ENCODE measurements at regions of chr1 and their contacts with region 1.

Region 1: GRCh38 chr1:218521375-218522169 is 176.4 kb downstream of the TGFB2 start:
- DNase-seq: no peak
- H3K4me3 ChIP-seq: no peak overlapping the region
- H3K27ac ChIP-seq: no peak overlapping the region
- H3K4me1 ChIP-seq: no peaks in the 10 kb centered on the region
- H3K27me3 ChIP-seq: no peaks in the 10 kb centered on the region
- CTCF ChIP-seq: peak; percentile 75

Region 2: DNA sequence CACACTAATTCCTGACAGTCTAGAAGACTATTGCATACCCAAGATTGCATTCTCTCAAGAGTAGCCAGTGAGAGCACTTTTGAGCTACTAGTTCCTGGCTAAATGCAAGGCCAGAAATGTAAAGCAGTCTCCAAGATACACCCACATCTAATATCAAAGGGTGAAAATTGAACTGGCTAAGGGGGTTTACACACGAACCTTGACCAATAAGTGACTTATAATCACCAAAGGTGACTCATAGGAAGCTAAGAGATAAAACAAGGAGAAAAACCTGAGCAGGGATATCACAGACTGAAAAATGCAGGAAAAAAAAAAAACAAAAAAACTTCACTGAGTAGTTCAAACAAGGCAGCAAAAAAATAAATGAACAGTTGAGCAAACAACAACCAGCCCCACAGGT is 408.7 kb before region 1 on chr1:
- intact Hi-C with region 1: no loop called
- DNase-seq: no peak
- H3K4me3 ChIP-seq: no peak overlapping the region
- H3K27ac ChIP-seq: no peak overlapping the region
- H3K4me1 ChIP-seq: no peaks in the 10 kb centered on the region
- H3K27me3 ChIP-seq: no peaks in the 10 kb centered on the region
- CTCF ChIP-seq: no peak

Region 3: GRCh38 chr1:218330043-218330623 is 191.4 kb before region 1 on chr1:
- intact Hi-C with region 1: loop called (anchors 10 kb)
- DNase-seq: no peak
- H3K4me3 ChIP-seq: no peak overlapping the region
- H3K27ac ChIP-seq: no peak overlapping the region
- H3K4me1 ChIP-seq: no peaks in the 10 kb centered on the region
- H3K27me3 ChIP-seq: no peaks in the 10 kb centered on the region
- CTCF ChIP-seq: peak; percentile 77

Region 4: DNA sequence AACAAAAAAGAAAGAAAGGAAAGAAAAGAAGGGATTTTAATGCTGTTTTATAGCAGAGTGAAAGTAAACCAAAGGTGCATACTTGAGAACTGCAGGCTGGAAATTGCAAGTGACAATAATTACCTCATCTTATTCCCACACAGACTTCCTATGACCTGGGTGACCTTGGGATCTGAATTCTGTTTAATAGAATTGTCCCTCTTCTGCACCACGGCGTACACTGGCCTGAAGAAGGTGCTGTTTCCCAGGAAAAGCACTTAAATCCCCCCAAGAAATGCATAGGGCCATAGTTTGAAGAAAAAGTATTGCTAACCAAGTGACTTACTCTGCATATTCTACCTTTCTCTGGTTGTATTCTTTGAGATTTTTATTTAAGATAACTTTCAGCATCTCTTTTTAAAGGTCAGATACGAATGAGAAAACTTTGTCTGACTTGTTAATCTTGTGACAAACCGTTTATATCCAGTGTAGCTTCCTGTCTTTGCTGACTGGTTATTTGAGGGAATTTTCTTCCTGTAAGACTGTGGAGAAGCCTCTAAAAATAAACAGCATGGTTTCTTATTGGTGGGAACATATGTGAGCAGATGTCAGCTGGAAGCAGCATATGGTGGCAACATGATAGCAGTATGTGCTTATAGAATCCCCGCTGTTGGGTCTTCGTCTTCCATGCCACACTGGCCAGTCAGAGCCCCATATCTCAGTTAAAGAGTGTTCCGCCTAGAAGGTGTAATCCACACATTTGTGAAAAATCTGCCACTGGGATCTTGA is 160.1 kb before region 1 on chr1:
- intact Hi-C with region 1: loop called (anchors 2 kb)
- DNase-seq: no peak
- H3K4me3 ChIP-seq: no peak overlapping the region
- H3K27ac ChIP-seq: no peak overlapping the region
- H3K4me1 ChIP-seq: peaks cover 7% of the 10 kb centered on the region
- H3K27me3 ChIP-seq: no peaks in the 10 kb centered on the region
- CTCF ChIP-seq: peak; percentile 65

Region 5: GRCh38 chr1:218447010-218447689 is 74.4 kb before region 1 on chr1:
- intact Hi-C with region 1: no loop called
- DNase-seq: peak; percentile 26
- H3K4me3 ChIP-seq: no peak overlapping the region
- H3K27ac ChIP-seq: peak overlapping the region; percentile 71
- H3K4me1 ChIP-seq: no peaks in the 10 kb centered on the region
- H3K27me3 ChIP-seq: no peaks in the 10 kb centered on the region
- CTCF ChIP-seq: no peak

Measured in left ventricle myocardium inferior (tissue), 1 donor.